ENCODE measurements at regions of chr16 and their contacts with region 1.

Region 1: GRCh38 chr16:2513405-2514322 is at the start of gene ATP6V0C:
- DNase-seq: peak; percentile 98
- H3K4me3 Mint-ChIP-seq: peak within 1 kb of the TSS; percentile 94
- H3K27ac Mint-ChIP-seq: peak within 1 kb of the TSS; percentile 97
- H3K4me1 Mint-ChIP-seq: peaks cover 38% of the 10 kb centered on the region
- H3K27me3 Mint-ChIP-seq: peaks cover 6% of the 10 kb centered on the region
- total RNA-seq, gene ATP6V0C: 105 and 122 TPM in 2 replicates

Region 2: DNA sequence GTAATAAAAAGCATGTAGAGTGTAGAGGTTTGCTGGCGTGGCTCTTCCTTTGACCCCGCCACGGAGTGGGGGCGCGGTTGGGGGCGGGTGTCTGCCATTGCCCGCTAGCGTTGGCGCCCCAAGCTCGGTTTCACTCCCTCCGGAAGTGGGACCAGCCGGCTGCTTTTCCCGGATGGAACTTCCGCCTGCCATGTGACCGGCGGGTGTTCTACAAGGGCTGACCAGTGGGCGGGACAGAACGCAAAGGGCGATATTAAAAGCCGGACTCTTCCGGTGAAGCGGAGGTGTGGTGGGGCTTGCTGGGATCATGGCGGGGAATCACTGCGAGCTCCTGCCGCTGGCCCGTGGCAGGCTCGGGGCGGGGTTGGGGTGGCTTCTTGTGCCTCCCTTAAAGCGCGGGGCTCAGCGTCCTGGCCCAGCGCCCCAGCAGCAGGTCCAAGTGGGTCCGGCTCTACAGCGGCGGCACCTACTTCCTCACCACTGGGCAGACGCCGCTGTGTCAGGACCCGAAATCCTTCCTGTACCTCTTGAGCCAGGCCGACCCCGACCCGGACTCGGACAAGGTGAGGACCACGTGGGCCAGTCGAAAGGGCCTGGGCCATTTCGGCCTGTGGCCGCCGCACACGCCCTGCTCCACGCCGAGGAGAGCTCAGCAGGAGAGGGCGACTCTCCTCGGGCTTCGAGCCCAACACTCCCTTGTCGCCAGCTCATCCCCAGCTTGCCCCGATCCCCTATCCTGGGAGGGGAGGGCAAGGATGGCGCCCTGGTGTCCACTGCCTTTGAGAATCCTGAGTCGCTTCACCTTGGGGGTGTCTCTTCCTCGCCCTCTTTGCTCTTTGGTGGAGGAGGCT is 89.7 kb after region 1 on chr16:
- intact Hi-C with region 1: loop called (anchors 10 kb)
- DNase-seq: peak; percentile 95
- H3K4me3 Mint-ChIP-seq: peak overlapping the region; percentile 98
- H3K27ac Mint-ChIP-seq: peak overlapping the region; percentile 94
- H3K4me1 Mint-ChIP-seq: peaks cover 15% of the 10 kb centered on the region
- H3K27me3 Mint-ChIP-seq: no peaks in the 10 kb centered on the region

Measured in activated CD4-positive, alpha-beta T cell treated with anti-CD3 and anti-CD28 coated beads, Interleukin-2, amount 10 ng/mL, durations not matched to agents 24 days and 14 days (primary cell).